ENCODE measurements at regions of chr6 and their contacts with region 1.

Region 1: DNA sequence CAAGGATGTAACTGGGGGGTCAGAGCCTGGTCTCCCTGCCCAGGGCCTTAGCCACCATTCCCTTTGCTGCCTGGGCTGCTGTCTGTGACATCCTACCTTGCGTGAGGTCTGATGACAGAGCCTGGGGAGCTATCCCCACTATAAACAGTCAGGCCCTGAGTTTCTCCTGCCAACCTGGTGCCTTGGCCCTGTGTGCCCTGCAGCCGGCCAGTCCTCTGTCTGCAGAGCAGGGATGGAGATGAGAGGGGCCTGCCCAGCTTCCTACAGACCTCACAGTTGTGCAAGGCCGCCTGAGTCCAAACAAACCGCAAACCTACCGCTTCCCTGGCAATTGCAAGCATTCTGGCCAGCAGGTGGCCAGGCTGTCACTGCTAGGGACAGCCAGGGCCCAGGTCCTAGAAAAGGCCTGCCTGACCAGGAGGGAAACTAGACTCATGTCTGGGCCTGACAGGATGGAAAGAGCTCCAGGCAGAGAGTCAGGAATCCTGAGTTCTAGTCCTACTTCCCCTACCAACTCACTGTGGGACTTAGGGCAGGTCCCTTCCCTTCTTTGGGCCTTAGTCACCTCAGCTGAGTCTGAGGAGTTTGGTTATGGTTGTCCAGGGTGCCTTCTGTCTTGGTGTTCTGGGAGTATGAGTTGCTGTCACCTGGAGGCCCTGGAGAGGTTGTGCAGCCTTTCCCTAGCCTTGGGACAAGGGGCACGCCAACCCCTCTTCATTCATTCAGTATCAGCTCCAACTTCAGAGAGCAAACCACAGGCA is 86.2 kb downstream of the VEGFA start:
- DNase-seq: peak; percentile 76 to 80 (median 79)
- ATAC-seq: peak; percentile 88 to 94 (median 93)
- H3K4me3 ChIP-seq: no peak overlapping the region
- H3K27ac ChIP-seq: peak overlapping the region; percentile 19 to 28 (median 26)
- H3K4me1 ChIP-seq: peaks cover 0 to 21% (median 3%) of the 10 kb centered on the region in 4 donors
- H3K27me3 ChIP-seq: no peaks in the 10 kb centered on the region
- CTCF ChIP-seq: peak; percentile 55 to 85 (median 70)
- POLR2A ChIP-seq: no peak

Region 2: GRCh38 chr6:43657221-43657802 is 198.9 kb before region 1 on chr6:
- intact Hi-C with region 1: no loop called
- DNase-seq: no peak
- ATAC-seq: no peak
- H3K4me3 ChIP-seq: no peak overlapping the region
- H3K27ac ChIP-seq: no peak overlapping the region
- H3K4me1 ChIP-seq: no peaks in the 10 kb centered on the region
- H3K27me3 ChIP-seq: no peaks in the 10 kb centered on the region
- CTCF ChIP-seq: no peak
- POLR2A ChIP-seq: no peak

Region 3: GRCh38 chr6:43891072-43891870 is 35.1 kb after region 1 on chr6:
- intact Hi-C with region 1: loop called in 1 of 2 experiments (anchors 5 kb)
- DNase-seq: no peak
- ATAC-seq: no peak
- H3K4me3 ChIP-seq: no peak overlapping the region
- H3K27ac ChIP-seq: no peak overlapping the region
- H3K4me1 ChIP-seq: peaks cover 0 to 19% (median 8%) of the 10 kb centered on the region in 4 donors
- H3K27me3 ChIP-seq: no peaks in the 10 kb centered on the region
- CTCF ChIP-seq: no peak
- POLR2A ChIP-seq: no peak

Measured in right lobe of liver (tissue), 6 donors.